Activated CD4-positive, alpha-beta T cell treated with anti-CD3 and anti-CD28 coated beads, Interleukin-2, amount 10 ng/mL, durations not matched to agents 24 days and 14 days (primary cell): ENCODE measurements at regions of chrX and their contacts with region 1.

Region 1: DNA sequence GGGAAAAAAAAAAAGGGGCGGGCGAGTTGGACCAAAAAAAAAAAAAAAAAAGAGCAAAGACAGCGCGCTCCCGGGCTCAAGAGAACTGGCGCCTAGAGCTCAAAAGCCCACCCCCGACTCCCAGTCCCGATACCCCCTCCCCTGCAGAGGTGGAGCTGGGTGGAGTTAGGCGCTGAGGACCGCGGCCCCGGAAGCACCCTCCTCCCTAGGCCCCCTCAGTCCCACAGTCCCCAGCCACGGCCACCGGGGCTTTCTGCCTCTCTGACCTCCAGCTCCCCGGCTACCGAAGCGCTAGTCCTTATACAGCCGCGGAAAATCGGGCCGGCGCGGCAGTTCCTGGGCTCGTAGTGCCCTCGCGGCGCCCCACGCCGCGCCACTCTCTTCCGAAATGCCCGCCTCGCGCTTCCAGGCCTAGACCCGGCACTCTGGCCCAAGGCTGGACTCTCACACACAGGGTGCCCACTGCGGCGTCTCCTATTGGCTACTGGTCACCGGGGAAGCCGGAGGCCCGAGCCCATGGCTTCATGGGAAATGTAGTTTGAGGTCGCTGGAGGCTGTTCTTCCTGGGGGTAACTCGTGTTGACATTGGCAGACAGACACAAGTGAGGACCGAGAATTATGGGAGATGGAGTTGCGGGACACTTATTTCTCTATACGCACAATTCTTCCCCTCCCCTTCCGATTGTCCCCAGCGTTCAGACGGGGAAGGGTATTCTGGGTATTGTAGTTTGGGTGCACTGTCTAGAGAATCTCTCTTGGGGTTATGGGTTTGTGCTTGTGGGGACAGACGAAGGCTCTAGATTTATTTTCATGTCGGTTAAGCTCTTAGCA is at the start of gene ENOX2:
- DNase-seq: peak; percentile 95
- H3K4me3 Mint-ChIP-seq: no peak within 1 kb of the TSS
- H3K27ac Mint-ChIP-seq: peak within 1 kb of the TSS; percentile 92
- H3K4me1 Mint-ChIP-seq: peaks cover 8% of the 10 kb centered on the region
- H3K27me3 Mint-ChIP-seq: peaks cover 2% of the 10 kb centered on the region
- total RNA-seq, gene ENOX2: 13.9 and 17.0 TPM in 2 replicates

Region 2: DNA sequence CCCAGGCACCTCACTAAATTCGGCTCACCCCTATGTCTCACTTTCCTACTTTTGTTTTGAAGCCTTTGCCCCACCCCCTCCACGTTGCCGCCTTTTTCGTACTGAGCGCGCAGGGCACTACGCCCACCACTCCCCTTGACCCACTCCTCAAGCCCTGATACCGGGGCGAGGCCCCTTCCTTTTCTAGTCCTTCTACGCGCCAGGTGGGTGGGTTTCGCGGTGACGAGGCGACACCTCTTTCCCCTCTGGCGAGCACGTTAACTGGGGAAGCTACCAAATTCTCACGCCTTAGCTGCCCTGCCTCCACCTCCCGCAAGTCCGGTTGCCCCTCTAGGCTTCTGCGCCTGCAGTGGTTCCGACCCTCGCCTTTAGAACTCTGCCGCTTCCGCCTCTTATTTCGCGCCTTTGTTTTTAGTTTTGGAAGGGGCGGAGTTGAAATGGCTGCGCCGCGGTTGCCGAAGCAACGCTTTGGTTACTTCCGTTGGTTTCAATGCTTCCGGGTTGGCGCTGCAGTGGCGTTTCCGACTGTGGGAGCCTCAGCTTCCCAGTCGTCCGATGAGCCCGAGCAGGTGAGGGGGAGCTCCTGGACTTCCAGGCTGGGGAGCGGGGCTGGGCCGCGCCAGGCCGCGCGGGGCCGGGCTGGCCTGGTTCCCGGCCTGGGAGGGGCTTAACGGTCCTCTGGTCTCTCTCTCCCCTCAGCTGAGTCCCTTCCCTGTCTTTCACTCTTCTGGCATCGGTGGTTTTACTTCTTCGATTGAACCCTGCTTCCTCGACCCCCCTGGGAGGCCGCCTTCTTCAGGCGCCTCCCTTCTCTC is 563.4 kb before region 1 on chrX and contains the start of gene SLC25A14:
- intact Hi-C with region 1: loop called (anchors 1 kb)
- DNase-seq: peak; percentile 92
- H3K4me3 Mint-ChIP-seq: peak within 1 kb of the TSS; percentile 95
- H3K27ac Mint-ChIP-seq: peak within 1 kb of the TSS; percentile 95
- H3K4me1 Mint-ChIP-seq: peaks cover 16% of the 10 kb centered on the region
- H3K27me3 Mint-ChIP-seq: no peaks in the 10 kb centered on the region
- total RNA-seq, gene SLC25A14: 9.1 and 11.9 TPM in 2 replicates

Region 3: GRCh38 chrX:130401415-130402207 is 501.4 kb before region 1 on chrX and contains the start of gene RBMX2:
- intact Hi-C with region 1: loop called (anchors 5 kb)
- DNase-seq: peak; percentile 92
- H3K4me3 Mint-ChIP-seq: peak within 1 kb of the TSS; percentile 92
- H3K27ac Mint-ChIP-seq: peak within 1 kb of the TSS; percentile 92
- H3K4me1 Mint-ChIP-seq: peaks cover 9% of the 10 kb centered on the region
- H3K27me3 Mint-ChIP-seq: peaks cover 9% of the 10 kb centered on the region
- total RNA-seq, gene RBMX2: 27.4 and 28.1 TPM in 2 replicates

Region 4: GRCh38 chrX:130829536-130830515 is 73.2 kb before region 1 on chrX:
- intact Hi-C with region 1: no loop called
- DNase-seq: no peak
- H3K4me3 Mint-ChIP-seq: no peak overlapping the region
- H3K27ac Mint-ChIP-seq: no peak overlapping the region
- H3K4me1 Mint-ChIP-seq: peaks cover 4% of the 10 kb centered on the region
- H3K27me3 Mint-ChIP-seq: no peaks in the 10 kb centered on the region

Region 5: DNA sequence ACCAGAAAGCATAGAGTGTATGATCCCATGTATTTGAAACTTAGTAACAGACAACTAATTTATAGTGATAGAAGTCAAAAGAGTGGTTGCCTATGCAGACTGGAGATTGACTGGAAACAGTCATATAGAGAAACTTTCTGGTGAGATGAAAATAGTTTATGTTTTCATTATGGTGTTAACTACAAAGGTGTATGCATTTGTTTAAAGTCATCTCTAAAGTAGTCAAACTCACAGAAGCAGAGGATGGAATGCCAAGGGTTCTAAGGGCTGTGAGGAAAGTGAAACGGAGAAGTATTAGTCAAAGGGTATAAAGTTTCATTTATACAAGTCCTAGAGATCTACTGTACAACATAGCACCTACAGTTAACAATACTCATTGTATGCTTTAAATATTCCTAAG is 45.8 kb before region 1 on chrX:
- intact Hi-C with region 1: loop called (anchors 5 kb)
- DNase-seq: peak; percentile 48
- H3K4me3 Mint-ChIP-seq: no peak overlapping the region
- H3K27ac Mint-ChIP-seq: no peak overlapping the region
- H3K4me1 Mint-ChIP-seq: peaks cover 7% of the 10 kb centered on the region
- H3K27me3 Mint-ChIP-seq: no peaks in the 10 kb centered on the region

Region 6: DNA sequence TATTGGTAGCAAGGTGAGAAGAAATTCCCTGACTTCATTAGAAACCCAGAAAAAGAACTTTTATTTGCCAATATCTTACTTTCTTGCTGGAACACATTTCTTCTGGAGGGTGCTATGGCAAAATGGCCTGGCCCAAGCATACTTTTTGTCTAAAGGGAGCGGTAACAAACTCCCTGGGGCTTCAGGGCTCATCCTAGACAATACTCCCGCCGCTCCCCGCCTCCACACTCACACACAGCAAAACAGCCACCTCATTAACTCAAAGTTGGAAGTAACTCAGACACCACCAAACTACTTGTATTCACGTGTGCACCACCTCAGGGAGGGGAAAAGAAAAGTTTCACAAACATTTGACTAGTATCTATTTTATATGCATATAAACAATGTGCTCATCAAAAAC is 310.4 kb after region 1 on chrX:
- intact Hi-C with region 1: no loop called
- DNase-seq: no peak
- H3K4me3 Mint-ChIP-seq: no peak overlapping the region
- H3K27ac Mint-ChIP-seq: no peak overlapping the region
- H3K4me1 Mint-ChIP-seq: no peaks in the 10 kb centered on the region
- H3K27me3 Mint-ChIP-seq: no peaks in the 10 kb centered on the region